T-cell (primary cell): ENCODE measurements at regions of chr14 and their contacts with region 1.

Region 1: DNA sequence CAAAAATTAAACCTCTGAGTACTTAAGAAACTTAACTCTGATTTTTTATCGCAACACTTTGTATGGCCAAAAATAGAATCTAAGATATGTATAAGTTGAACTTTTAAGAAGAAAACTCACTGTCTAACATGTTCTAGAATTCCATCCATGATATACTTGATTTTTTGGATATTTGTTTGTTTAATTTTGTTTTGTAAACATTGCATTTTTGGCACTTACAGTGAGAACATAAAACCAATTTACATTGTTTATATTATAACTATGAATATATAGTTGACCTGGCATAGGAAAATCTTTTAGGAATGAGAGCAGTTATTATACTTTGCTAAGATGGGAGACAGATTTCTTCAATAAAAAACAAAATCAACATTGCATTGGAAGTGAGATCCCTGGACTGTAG is 152.2 kb downstream of the FOXG1 start:
- DNase-seq: no peak
- ATAC-seq: no peak
- H3K4me3 ChIP-seq: no peak overlapping the region
- H3K4me3 Mint-ChIP-seq: no peak overlapping the region
- H3K27ac ChIP-seq: no peak overlapping the region
- H3K27ac Mint-ChIP-seq: no peak overlapping the region
- H3K4me1 ChIP-seq: no peaks in the 10 kb centered on the region
- H3K4me1 Mint-ChIP-seq: no peaks in the 10 kb centered on the region
- H3K27me3 ChIP-seq: no peaks in the 10 kb centered on the region
- H3K27me3 Mint-ChIP-seq: no peaks in the 10 kb centered on the region

Region 2: GRCh38 chr14:28946267-28946666 is 27.5 kb after region 1 on chr14:
- CTCF ChIA-PET with region 1: no interaction called
- POLR2A ChIA-PET with region 1: interaction called in 1 of 2 experiments, 11 read pairs
- DNase-seq: no peak
- ATAC-seq: no peak
- H3K4me3 ChIP-seq: no peak overlapping the region
- H3K4me3 Mint-ChIP-seq: no peak overlapping the region
- H3K27ac ChIP-seq: no peak overlapping the region
- H3K27ac Mint-ChIP-seq: no peak overlapping the region
- H3K4me1 ChIP-seq: no peaks in the 10 kb centered on the region
- H3K4me1 Mint-ChIP-seq: no peaks in the 10 kb centered on the region
- H3K27me3 ChIP-seq: no peaks in the 10 kb centered on the region
- H3K27me3 Mint-ChIP-seq: no peaks in the 10 kb centered on the region